BJ (cell line): ENCODE measurements at regions of chr11 and their contacts with region 1.

Region 1: GRCh38 chr11:6377902-6378639 is 12.2 kb upstream of the SMPD1 start:
- DNase-seq: no peak
- H3K4me3 ChIP-seq: no peak overlapping the region
- H3K27me3 ChIP-seq: no peaks in the 10 kb centered on the region; the same call in none of the 2 replicates
- CTCF ChIP-seq: no peak

Region 2: DNA sequence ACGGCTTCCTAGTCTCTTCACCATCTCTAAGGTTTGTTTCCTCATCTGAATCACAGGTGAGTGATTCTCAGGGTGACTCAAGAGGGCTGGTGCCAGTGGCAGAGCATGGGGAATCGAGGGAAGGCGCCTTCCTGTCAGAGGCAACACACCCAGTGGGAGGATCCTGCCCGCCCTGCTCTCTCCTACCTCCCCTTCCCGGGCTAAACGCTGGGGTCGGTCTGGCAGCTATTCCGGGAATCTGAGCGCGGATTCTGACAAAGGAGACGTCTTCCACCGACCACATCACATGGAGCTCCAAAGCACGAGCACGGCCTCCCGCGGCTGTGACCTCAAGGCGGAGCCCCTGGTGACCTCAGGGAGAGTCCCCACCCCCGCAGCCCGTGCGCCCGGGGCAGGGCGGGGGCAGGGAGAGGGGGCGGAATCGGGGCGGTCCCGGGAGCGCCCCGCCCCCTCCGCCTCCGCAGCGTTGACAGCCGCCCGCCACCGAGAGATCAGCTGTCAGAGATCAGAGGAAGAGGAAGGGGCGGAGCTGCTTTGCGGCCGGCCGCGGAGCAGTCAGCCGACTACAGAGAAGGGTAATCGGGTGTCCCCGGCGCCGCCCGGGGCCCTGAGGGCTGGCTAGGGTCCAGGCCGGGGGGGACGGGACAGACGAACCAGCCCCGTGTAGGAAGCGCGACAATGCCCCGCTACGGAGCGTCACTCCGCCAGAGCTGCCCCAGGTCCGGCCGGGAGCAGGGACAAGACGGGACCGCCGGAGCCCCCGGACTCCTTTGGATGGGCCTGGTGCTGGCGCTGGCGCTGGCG is 12.1 kb after region 1 on chr11 and contains the start of gene SMPD1:
- CTCF ChIA-PET with region 1: interaction called, 31 read pairs
- POLR2A ChIA-PET with region 1: no interaction called
- DNase-seq: peak; percentile 34
- H3K4me3 ChIP-seq: peak within 1 kb of the TSS; percentile 76
- H3K27me3 ChIP-seq: no peaks in the 10 kb centered on the region
- CTCF ChIP-seq: no peak
- polyA plus RNA-seq, gene SMPD1: 76.1 and 118 TPM in 2 replicates

Region 3: GRCh38 chr11:6443269-6444003 is 65.4 kb after region 1 on chr11:
- CTCF ChIA-PET with region 1: interaction called, 376 read pairs
- POLR2A ChIA-PET with region 1: interaction called, 5 read pairs
- DNase-seq: no peak
- H3K4me3 ChIP-seq: no peak overlapping the region
- H3K27me3 ChIP-seq: no peaks in the 10 kb centered on the region
- CTCF ChIP-seq: peak; percentile 92

Region 4: GRCh38 chr11:6505577-6506240 is 127.6 kb after region 1 on chr11:
- CTCF ChIA-PET with region 1: interaction called, 28 read pairs
- POLR2A ChIA-PET with region 1: no interaction called
- DNase-seq: peak; percentile 27
- H3K4me3 ChIP-seq: no peak overlapping the region
- H3K27me3 ChIP-seq: no peaks in the 10 kb centered on the region
- CTCF ChIP-seq: peak; percentile 66

Region 5: GRCh38 chr11:6705905-6706535 is 327.9 kb after region 1 on chr11:
- CTCF ChIA-PET with region 1: interaction called, 35 read pairs
- POLR2A ChIA-PET with region 1: no interaction called
- DNase-seq: no peak
- H3K4me3 ChIP-seq: no peak overlapping the region
- H3K27me3 ChIP-seq: no peaks in the 10 kb centered on the region
- CTCF ChIP-seq: peak; percentile 94